Activated B cell treated with CpG ODN at 0.5 μM for 24 hours (primary cell): ENCODE measurements at regions of chr11 and their contacts with region 1.

Region 1: GRCh38 chr11:66344550-66345315 is at the start of gene BRMS1:
- DNase-seq: peak; percentile 93
- ATAC-seq: peak; percentile 82
- H3K4me3 Mint-ChIP-seq: peak within 1 kb of the TSS; percentile 96
- H3K27ac Mint-ChIP-seq: peak within 1 kb of the TSS; percentile 93
- H3K4me1 Mint-ChIP-seq: peaks cover 45% of the 10 kb centered on the region
- H3K27me3 Mint-ChIP-seq: peaks cover 2% of the 10 kb centered on the region
- CTCF ChIP-seq: no peak
- total RNA-seq, gene BRMS1: 56.9 and 59.2 TPM in 2 replicates

Region 2: GRCh38 chr11:66157179-66157864 is 187.4 kb before region 1 on chr11:
- CTCF ChIA-PET with region 1: no interaction called
- POLR2A ChIA-PET with region 1: no interaction called
- intact Hi-C with region 1: no loop called
- DNase-seq: no peak
- ATAC-seq: peak; percentile 40
- H3K4me3 Mint-ChIP-seq: no peak overlapping the region
- H3K27ac Mint-ChIP-seq: no peak overlapping the region
- H3K4me1 Mint-ChIP-seq: peaks cover 26% of the 10 kb centered on the region
- H3K27me3 Mint-ChIP-seq: no peaks in the 10 kb centered on the region
- CTCF ChIP-seq: no peak

Region 3: DNA sequence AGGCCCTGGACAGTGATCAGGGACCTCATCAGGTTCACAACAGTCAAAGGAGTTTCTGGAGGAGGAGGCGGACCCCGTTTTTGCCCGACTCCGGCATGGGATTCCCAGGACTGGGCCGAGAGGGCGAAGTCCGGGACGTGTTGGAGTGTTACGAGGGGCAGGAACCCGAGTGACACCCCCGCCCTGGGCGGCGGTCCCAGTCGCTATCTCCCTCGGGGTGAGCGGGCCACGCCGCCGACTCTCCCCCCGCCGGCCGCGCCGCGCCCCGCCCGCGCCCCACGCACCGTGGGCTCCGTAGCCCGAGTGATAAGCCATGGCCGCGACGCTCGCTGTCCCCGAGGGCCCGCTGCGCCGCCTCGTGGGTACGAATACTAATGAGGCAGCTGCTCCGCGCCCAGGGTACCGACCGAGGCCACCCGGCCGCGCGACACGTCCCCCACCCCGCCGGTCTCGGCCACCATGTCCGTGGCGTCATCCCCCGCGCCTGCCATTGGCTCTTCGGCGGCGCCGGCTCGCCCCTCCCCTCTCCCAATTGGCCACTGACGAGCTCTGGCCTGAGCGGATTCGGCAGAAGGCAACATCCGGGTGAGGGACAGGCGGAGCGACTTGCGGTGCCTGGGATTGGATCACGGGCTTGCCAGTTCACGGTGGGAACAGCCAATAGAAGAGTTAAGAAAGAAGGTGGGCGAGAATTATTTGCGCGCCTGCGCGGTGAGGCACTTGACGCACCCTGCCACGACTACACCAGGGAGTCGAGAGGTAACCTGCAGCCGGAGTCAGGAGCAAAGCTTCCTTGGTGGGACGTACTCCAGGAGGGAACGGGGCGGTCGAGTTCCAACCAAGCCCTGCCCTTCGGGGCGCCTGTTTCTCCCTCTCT is 55.8 kb before region 1 on chr11 and contains the start of gene YIF1A:
- CTCF ChIA-PET with region 1: no interaction called
- POLR2A ChIA-PET with region 1: interaction called, 11 read pairs
- intact Hi-C with region 1: no loop called
- DNase-seq: peak; percentile 93
- ATAC-seq: peak; percentile 95
- H3K4me3 Mint-ChIP-seq: peak within 1 kb of the TSS; percentile 89
- H3K27ac Mint-ChIP-seq: peak within 1 kb of the TSS; percentile 90
- H3K4me1 Mint-ChIP-seq: peaks cover 31% of the 10 kb centered on the region
- H3K27me3 Mint-ChIP-seq: peaks cover 17% of the 10 kb centered on the region
- CTCF ChIP-seq: no peak
- total RNA-seq, gene YIF1A: 53.4 and 62.6 TPM in 2 replicates

Region 4: GRCh38 chr11:66328307-66329144 is 16.2 kb before region 1 on chr11:
- CTCF ChIA-PET with region 1: no interaction called
- POLR2A ChIA-PET with region 1: no interaction called
- intact Hi-C with region 1: loop called (anchors 2 kb)
- DNase-seq: peak; percentile 79
- ATAC-seq: peak; percentile 99
- H3K4me3 Mint-ChIP-seq: peak overlapping the region; percentile 46
- H3K27ac Mint-ChIP-seq: no peak overlapping the region
- H3K4me1 Mint-ChIP-seq: peaks cover 22% of the 10 kb centered on the region
- H3K27me3 Mint-ChIP-seq: no peaks in the 10 kb centered on the region
- CTCF ChIP-seq: peak; percentile 63

Region 5: GRCh38 chr11:66371627-66372415 is 27.1 kb after region 1 on chr11 and contains the start of gene SLC29A2:
- CTCF ChIA-PET with region 1: interaction called, 3 read pairs
- POLR2A ChIA-PET with region 1: interaction called, 34 read pairs
- intact Hi-C with region 1: loop called (anchors 1 kb)
- DNase-seq: peak; percentile 78
- ATAC-seq: peak; percentile 87
- H3K4me3 Mint-ChIP-seq: peak within 1 kb of the TSS; percentile 90
- H3K27ac Mint-ChIP-seq: peak within 1 kb of the TSS; percentile 94
- H3K4me1 Mint-ChIP-seq: peaks cover 15% of the 10 kb centered on the region
- H3K27me3 Mint-ChIP-seq: no peaks in the 10 kb centered on the region
- CTCF ChIP-seq: no peak
- total RNA-seq, gene SLC29A2: 13.5 and 17.1 TPM in 2 replicates